AG04450 (cell line): ENCODE measurements at regions of chr6 and their contacts with region 1.

Region 1: DNA sequence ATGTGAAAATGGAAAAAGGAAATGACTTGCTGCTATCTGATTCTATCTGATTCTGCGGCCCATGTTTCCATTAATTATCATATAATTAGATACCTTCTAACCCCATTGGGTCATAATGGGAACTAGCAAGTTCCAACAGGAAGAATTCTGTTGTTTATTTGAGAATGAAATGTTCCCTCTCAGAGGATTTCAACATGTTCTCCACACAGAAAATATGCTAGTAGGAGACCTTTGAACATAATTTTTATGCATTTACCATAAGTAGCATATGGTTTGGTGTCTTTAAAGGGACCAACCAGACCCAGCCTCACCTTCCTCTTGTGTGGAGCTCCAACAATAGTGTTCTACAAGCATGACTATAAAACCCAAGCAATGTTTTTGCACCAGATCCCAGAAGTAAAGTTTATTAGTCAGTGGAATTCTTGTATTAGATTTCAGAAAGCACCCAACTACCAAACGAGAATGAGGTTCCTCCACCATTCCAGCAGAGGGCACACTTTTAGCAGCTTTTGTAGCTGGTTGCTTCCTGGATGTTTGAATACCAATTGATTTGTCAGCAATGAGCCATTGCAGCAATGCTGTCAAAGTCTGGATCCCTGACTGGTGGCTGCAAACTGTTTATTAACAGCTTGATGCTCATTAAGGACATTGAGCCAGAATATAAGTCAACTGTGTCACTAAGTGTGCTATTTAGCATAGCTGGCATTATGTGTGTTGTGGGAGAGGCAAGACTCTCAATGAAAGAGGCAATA is 143.6 kb upstream of the GJE1 start:
- DNase-seq: peak; percentile 43
- H3K4me3 ChIP-seq: no peak overlapping the region
- H3K27ac ChIP-seq: no peak overlapping the region
- H3K27me3 ChIP-seq: no peaks in the 10 kb centered on the region
- CTCF ChIP-seq: peak; percentile 91

Region 2: DNA sequence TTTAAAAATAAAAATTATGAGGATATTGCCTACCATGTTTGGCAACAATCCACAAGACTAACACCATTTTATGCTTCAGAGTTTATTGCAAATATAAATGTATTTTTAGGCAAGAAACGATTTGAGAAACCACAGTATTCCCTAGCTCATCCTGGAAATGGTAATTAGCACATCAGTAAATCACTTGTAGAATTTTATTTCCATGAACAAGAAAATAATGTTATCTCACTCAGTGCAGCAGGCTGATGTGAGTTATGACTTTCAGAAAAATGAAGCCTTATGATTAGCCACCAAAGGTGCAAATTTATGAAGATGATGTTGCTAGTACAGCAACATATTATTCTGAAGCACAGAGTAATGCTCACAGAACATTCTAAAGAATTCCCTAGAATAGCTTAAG is 15.9 kb after region 1 on chr6:
- CTCF ChIA-PET with region 1: interaction called, 14 read pairs
- POLR2A ChIA-PET with region 1: no interaction called
- DNase-seq: no peak
- H3K4me3 ChIP-seq: no peak overlapping the region
- H3K27ac ChIP-seq: no peak overlapping the region
- H3K27me3 ChIP-seq: no peaks in the 10 kb centered on the region
- CTCF ChIP-seq: no peak

Region 3: DNA sequence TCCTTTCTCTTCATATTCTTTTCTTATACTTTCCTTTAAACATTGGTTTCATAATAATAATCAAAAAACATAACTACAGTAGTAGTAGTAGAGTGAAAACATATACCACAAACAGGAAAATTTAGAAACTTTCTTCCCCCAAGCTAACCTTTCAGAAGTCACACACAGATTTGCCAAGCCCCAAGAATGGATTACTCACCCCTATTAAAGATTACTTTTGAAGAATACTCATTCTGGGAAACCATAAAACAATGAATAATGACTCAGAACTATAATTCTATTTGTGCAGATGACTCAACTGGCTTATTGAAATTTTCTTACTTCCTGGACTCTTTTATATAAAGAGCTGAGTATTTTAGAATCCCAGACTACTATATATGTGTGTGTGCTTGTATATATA is 24.2 kb after region 1 on chr6:
- CTCF ChIA-PET with region 1: interaction called, 31 read pairs
- POLR2A ChIA-PET with region 1: no interaction called
- DNase-seq: peak; percentile 37
- H3K4me3 ChIP-seq: no peak overlapping the region
- H3K27ac ChIP-seq: no peak overlapping the region
- H3K27me3 ChIP-seq: no peaks in the 10 kb centered on the region
- CTCF ChIP-seq: no peak

Region 4: GRCh38 chr6:142030115-142030619 is 41.0 kb after region 1 on chr6:
- CTCF ChIA-PET with region 1: interaction called, 16 read pairs
- POLR2A ChIA-PET with region 1: no interaction called
- DNase-seq: no peak
- H3K4me3 ChIP-seq: peak overlapping the region; percentile 59
- H3K27ac ChIP-seq: peak overlapping the region; percentile 47
- H3K27me3 ChIP-seq: no peaks in the 10 kb centered on the region
- CTCF ChIP-seq: no peak

Region 5: DNA sequence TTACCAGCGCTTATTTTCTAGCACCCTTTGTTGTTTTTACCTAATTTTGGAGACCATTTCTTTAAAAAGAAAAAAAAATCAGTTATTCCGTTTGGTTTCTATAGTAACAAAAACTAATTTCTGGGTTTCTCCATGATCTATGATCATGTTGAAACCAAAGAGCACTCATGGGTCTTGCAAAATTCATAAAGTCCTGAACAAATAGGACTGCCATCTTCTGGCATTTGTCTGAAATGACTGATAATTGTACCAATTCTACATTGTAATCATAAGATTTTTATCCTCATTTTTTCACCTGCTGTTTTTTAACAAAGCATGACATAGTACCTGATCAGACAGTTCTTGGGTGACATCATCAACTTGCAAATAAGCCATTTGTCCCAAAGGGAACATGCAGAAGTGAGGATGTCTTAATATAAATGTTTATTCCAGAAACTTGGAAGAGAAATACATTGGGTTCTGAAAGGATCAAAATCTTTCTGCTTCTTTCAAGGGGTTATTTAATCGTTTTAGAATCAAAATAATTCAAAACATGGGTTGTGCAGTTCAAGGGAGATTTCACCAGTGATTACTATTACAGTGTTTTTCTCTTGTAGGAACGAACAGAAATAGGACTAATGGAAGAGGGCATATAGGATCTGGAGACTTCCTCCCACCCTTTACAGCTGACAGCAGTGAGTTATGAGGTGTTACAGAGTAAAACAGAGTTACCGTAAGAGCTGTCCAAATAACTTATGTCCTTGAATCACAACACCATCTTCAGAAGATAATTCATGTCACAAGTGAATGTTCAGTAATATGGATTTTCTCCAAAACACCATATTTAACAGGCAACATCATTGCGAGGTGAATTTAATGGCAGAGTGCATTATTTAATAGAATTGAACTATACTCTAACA is 56.5 kb after region 1 on chr6:
- CTCF ChIA-PET with region 1: interaction called, 28 read pairs
- POLR2A ChIA-PET with region 1: no interaction called
- DNase-seq: no peak
- H3K4me3 ChIP-seq: no peak overlapping the region
- H3K27ac ChIP-seq: no peak overlapping the region
- H3K27me3 ChIP-seq: no peaks in the 10 kb centered on the region
- CTCF ChIP-seq: peak; percentile 47

Region 6: DNA sequence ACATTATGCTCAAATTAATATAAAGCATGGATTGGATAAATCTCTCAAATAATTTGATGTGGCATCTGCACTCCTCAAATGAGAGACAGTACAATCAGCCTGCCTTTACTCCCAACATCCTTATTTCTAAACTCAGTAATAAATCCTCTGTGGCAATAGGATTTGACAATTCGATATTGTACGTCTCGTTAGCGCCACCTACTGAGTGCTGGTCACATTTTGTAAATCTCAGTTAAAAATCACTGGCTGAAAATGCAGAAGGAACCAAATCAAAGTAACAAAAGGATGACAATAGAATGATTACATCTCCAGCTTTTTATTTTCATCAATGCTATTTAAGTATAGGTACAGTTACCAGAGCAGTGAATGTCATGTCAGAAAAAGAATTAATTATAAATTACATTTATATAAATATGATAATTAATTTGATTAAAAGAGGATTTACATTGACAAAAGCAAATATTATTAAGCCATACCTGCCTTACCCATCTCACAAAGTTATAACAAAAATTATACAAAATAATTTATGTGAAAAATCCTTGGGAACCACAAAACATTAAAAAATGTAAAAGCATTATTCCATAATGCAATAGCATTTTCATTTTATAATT is 123.4 kb after region 1 on chr6:
- CTCF ChIA-PET with region 1: interaction called, 78 read pairs
- POLR2A ChIA-PET with region 1: no interaction called
- DNase-seq: peak; percentile 53
- H3K4me3 ChIP-seq: no peak overlapping the region
- H3K27ac ChIP-seq: no peak overlapping the region
- H3K27me3 ChIP-seq: no peaks in the 10 kb centered on the region
- CTCF ChIP-seq: peak; percentile 85

Region 7: GRCh38 chr6:142246960-142247359 is 257.8 kb after region 1 on chr6:
- CTCF ChIA-PET with region 1: no interaction called
- POLR2A ChIA-PET with region 1: no interaction called
- DNase-seq: no peak
- H3K4me3 ChIP-seq: no peak overlapping the region
- H3K27ac ChIP-seq: no peak overlapping the region
- H3K27me3 ChIP-seq: no peaks in the 10 kb centered on the region
- CTCF ChIP-seq: no peak